Activated T-helper 1 cell treated with anti-CD3 and anti-CD28 coated beads, Interleukin-12 subunit alpha, Interleukin-12 subunit beta, Interleukin-2, Interleukin-4 antibody, amounts not matched to agents 30 ng/mL and 10 ng/mL and 1 ng/mL, durations not matched to agents 14 hours and 24 hours and 36 hours (primary cell): ENCODE measurements at regions of chr3 and their contacts with region 1.

Region 1: GRCh38 chr3:36957862-36958686 is 13.2 kb upstream of the TRANK1 start:
- DNase-seq: no peak
- H3K4me3 Mint-ChIP-seq: no peak overlapping the region
- H3K27ac Mint-ChIP-seq: peak overlapping the region; percentile 25
- H3K4me1 Mint-ChIP-seq: peaks cover 12% of the 10 kb centered on the region
- H3K27me3 Mint-ChIP-seq: peaks cover 8% of the 10 kb centered on the region

Region 2: GRCh38 chr3:36729204-36730056 is 228.6 kb before region 1 on chr3:
- intact Hi-C with region 1: loop called (anchors 1 kb)
- DNase-seq: no peak
- H3K4me3 Mint-ChIP-seq: no peak overlapping the region
- H3K27ac Mint-ChIP-seq: no peak overlapping the region
- H3K4me1 Mint-ChIP-seq: no peaks in the 10 kb centered on the region
- H3K27me3 Mint-ChIP-seq: peaks cover 14% of the 10 kb centered on the region

Region 3: GRCh38 chr3:36814776-36815175 is 143.3 kb before region 1 on chr3:
- intact Hi-C with region 1: no loop called
- DNase-seq: no peak
- H3K4me3 Mint-ChIP-seq: no peak overlapping the region
- H3K27ac Mint-ChIP-seq: no peak overlapping the region
- H3K4me1 Mint-ChIP-seq: no peaks in the 10 kb centered on the region
- H3K27me3 Mint-ChIP-seq: peaks cover 15% of the 10 kb centered on the region

Region 4: DNA sequence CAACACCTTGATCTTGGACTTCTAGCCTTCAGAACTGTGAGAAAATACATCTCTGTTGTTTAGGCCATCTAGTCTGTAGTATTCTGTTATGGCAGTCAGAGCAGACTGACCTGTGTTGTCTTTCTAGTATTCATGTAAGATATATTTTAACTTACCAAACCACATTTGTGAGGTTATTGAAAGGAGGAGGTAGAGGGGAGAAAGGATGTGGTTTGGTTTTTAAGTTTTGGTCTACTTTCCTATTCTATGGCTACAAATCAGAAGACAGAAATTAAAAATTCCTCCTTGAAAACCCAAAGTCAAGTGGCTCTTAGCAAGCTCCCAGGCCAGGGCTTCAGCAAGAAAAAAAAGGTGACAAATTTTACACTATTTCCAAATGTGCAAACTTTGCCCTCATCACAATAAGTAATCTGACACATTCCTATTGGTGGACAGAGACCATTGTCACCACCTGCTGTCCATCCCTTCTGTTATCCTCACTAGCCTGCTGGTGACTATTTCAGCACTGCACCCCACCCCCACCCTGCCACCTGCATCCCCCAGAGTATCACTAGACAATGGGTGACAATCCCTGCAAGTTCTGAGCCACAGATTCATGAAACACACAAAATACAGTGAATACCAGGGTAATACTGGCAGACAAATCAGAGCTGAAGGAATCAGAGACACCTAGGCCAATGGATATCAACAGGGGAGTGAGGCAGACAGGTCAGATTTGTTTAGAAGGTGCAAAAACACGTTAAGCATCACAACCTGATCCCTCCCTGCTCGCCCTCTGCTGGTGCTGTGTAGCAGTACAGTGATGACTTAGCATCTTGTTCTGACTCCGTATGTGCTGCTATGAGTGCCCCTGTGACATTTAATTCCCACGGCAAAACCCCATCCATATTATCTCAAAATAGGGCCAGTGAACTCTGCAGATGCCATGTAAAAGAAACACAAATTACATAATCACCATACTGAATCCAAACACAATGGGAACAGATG is 114.7 kb before region 1 on chr3:
- intact Hi-C with region 1: loop called (anchors 1 kb)
- DNase-seq: peak; percentile 28
- H3K4me3 Mint-ChIP-seq: peak overlapping the region; percentile 3
- H3K27ac Mint-ChIP-seq: no peak overlapping the region
- H3K4me1 Mint-ChIP-seq: peaks cover 20% of the 10 kb centered on the region
- H3K27me3 Mint-ChIP-seq: no peaks in the 10 kb centered on the region

Region 5: DNA sequence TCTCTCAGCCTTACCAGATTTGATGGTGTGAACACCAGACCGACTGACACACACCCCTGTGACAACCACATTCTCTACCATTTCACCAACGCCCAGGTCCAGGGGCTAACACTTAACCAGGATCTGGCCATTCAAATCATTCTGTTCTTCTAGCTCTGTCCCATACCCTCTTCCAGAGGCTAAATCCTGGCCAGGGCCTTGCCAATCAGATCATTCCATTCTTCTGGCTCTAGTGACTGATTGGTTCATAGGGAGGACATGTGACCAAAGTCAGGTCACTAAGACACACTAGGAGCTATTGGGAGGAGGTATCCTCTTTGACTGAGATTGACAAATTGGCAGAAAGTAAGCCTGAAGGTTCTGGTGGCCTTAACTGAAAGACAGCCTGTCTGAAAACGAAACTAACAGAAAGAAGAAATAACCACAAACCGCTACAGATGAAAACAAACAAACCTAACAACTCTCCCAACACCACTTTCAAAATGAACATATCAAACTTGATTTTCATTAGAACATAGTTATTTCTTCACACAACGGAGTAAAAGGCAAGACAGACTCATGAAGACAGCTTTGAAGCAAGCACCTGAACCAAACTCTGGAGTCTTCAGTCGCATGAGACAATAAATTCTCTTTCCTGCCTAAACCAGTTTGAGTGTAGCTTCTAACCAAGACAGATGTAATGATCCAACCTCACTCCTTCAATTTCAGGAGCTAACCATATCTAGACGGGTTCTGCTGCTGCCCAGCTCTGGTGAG is 81.7 kb before region 1 on chr3:
- intact Hi-C with region 1: loop called (anchors 1 kb)
- DNase-seq: peak; percentile 20
- H3K4me3 Mint-ChIP-seq: peak overlapping the region; percentile 55
- H3K27ac Mint-ChIP-seq: peak overlapping the region; percentile 69
- H3K4me1 Mint-ChIP-seq: peaks cover 25% of the 10 kb centered on the region
- H3K27me3 Mint-ChIP-seq: peaks cover 18% of the 10 kb centered on the region

Region 6: GRCh38 chr3:36944012-36944640 is 13.9 kb before region 1 on chr3:
- intact Hi-C with region 1: loop called (anchors 1 kb)
- DNase-seq: no peak
- H3K4me3 Mint-ChIP-seq: peak overlapping the region; percentile 69
- H3K27ac Mint-ChIP-seq: no peak overlapping the region
- H3K4me1 Mint-ChIP-seq: no peaks in the 10 kb centered on the region
- H3K27me3 Mint-ChIP-seq: peaks cover 16% of the 10 kb centered on the region